Activated CD8-positive, alpha-beta T cell treated with anti-CD3 and anti-CD28 coated beads, Interleukin-2, amount 10 ng/mL, durations not matched to agents 7 days and 5 days (primary cell): ENCODE measurements at regions of chr3 and their contacts with region 1.

Region 1: GRCh38 chr3:71456156-71456555 is 127.4 kb downstream of the FOXP1 start:
- DNase-seq: no peak
- ATAC-seq: no peak
- H3K4me3 Mint-ChIP-seq: peak overlapping the region; percentile 76
- H3K27ac Mint-ChIP-seq: peak overlapping the region; percentile 87
- H3K4me1 Mint-ChIP-seq: peaks cover 81% of the 10 kb centered on the region
- H3K27me3 Mint-ChIP-seq: no peaks in the 10 kb centered on the region

Region 2: GRCh38 chr3:71397046-71397445 is 59.1 kb before region 1 on chr3:
- CTCF ChIA-PET with region 1: interaction called, 20 read pairs
- POLR2A ChIA-PET with region 1: interaction called, 4 read pairs
- DNase-seq: no peak
- ATAC-seq: no peak
- H3K4me3 Mint-ChIP-seq: no peak overlapping the region
- H3K27ac Mint-ChIP-seq: no peak overlapping the region
- H3K4me1 Mint-ChIP-seq: peaks cover 50% of the 10 kb centered on the region
- H3K27me3 Mint-ChIP-seq: no peaks in the 10 kb centered on the region

Region 3: DNA sequence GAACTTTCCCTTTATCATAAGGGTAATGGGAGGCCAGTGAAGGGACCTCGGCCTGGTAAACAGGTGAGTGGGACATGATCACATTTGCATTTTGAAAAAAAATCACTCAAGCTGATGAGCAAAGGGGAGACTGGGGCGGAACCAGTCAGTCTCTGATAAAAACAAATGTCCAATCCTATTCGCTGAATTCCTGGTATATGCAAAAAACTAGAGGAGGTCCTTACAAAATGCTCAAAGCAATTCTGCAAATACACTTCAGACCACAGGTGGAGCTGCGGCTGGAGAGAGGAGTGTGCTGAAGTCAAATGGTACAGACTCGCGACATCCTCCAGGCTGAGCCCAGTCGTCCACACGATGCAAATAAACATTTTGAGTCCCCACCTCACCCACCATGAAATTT is 39.3 kb before region 1 on chr3:
- CTCF ChIA-PET with region 1: interaction called, 19 read pairs
- POLR2A ChIA-PET with region 1: interaction called, 12 read pairs
- DNase-seq: peak; percentile 75
- ATAC-seq: peak; percentile 73
- H3K4me3 Mint-ChIP-seq: peak overlapping the region; percentile 58
- H3K27ac Mint-ChIP-seq: peak overlapping the region; percentile 80
- H3K4me1 Mint-ChIP-seq: peaks cover 67% of the 10 kb centered on the region
- H3K27me3 Mint-ChIP-seq: no peaks in the 10 kb centered on the region

Region 4: DNA sequence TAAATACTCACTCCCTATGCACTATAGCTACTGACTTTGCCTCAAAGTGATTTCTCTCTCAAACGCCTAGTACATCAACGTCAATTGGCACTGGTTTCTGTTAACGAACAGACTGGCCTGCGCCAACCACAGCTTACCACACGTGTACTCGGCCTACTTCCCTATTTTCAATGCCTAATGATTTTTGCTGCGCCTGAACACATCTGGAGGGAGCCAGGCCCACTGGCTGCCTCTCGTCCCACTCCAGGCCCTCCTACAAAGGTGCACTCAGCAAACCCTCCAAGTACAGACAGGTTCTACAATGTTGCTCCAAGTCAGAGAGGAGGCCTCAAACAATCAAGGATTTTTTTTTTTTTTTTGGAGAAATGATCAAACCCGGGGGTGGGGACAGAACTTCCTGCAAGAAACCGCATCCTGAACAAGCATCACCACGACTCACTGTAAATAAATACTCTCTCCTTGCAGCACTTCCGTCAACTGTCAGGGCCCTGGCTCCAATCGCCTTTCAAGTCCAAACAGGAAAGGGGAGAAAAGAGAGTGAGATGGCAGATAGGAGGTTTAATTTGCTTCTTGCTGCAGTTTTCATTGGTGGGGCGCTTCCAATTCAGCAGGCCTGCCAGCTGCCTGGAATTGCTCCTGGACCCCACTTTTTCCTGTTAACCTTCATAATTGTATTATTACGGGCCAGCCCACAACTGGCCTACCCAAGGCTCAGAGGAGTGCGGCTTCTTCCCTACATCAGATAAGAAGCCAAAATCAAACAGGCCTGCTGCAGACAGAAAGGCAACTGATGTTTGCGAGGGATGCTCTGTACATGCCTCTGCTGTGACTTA is 11.9 kb before region 1 on chr3:
- CTCF ChIA-PET with region 1: interaction called, 8 read pairs
- POLR2A ChIA-PET with region 1: interaction called, 60 read pairs
- DNase-seq: peak; percentile 88
- ATAC-seq: peak; percentile 78
- H3K4me3 Mint-ChIP-seq: peak overlapping the region; percentile 76
- H3K27ac Mint-ChIP-seq: peak overlapping the region; percentile 99
- H3K4me1 Mint-ChIP-seq: peaks cover 95% of the 10 kb centered on the region
- H3K27me3 Mint-ChIP-seq: no peaks in the 10 kb centered on the region

Region 5: DNA sequence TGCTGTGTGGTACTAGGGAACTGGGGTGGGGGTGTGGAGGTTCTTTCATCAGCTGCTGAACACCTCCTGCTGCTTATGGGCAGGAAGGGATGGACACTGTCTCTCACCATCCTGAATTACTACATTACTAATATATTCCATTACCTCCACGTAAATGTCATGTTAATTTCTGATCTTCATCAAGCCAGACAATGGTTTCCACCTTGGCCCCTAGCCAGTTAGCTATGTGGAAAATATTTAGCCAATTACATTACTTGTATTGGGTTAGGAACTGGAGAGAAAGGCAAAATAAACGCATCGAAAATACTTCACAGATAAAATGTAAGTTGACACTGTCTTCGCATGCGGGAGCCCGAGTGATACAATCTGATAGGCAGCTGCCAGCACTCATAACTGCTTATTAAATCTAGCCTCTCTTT is 32.2 kb after region 1 on chr3:
- CTCF ChIA-PET with region 1: interaction called, 12 read pairs
- POLR2A ChIA-PET with region 1: interaction called, 14 read pairs
- DNase-seq: no peak
- ATAC-seq: peak; percentile 14
- H3K4me3 Mint-ChIP-seq: peak overlapping the region; percentile 38
- H3K27ac Mint-ChIP-seq: peak overlapping the region; percentile 94
- H3K4me1 Mint-ChIP-seq: peaks cover 87% of the 10 kb centered on the region
- H3K27me3 Mint-ChIP-seq: no peaks in the 10 kb centered on the region

Region 6: GRCh38 chr3:71495708-71496472 is 39.7 kb after region 1 on chr3:
- CTCF ChIA-PET with region 1: interaction called, 18 read pairs
- POLR2A ChIA-PET with region 1: interaction called, 11 read pairs
- DNase-seq: peak; percentile 52
- ATAC-seq: peak; percentile 69
- H3K4me3 Mint-ChIP-seq: peak overlapping the region; percentile 66
- H3K27ac Mint-ChIP-seq: peak overlapping the region; percentile 90
- H3K4me1 Mint-ChIP-seq: peaks cover 71% of the 10 kb centered on the region
- H3K27me3 Mint-ChIP-seq: no peaks in the 10 kb centered on the region

Region 7: GRCh38 chr3:71583566-71584449 is 127.7 kb after region 1 on chr3 and contains the start of gene FOXP1:
- CTCF ChIA-PET with region 1: interaction called, 14 read pairs
- POLR2A ChIA-PET with region 1: interaction called, 9 read pairs
- DNase-seq: peak; percentile 72
- ATAC-seq: peak; percentile 43
- H3K4me3 Mint-ChIP-seq: peak within 1 kb of the TSS; percentile 85
- H3K27ac Mint-ChIP-seq: peak within 1 kb of the TSS; percentile 92
- H3K4me1 Mint-ChIP-seq: peaks cover 39% of the 10 kb centered on the region
- H3K27me3 Mint-ChIP-seq: no peaks in the 10 kb centered on the region
- total RNA-seq, gene FOXP1: 120 to 122 TPM